Activated T-helper 1 cell treated with anti-CD3 and anti-CD28 coated beads, Interleukin-12 subunit alpha, Interleukin-12 subunit beta, Interleukin-2, Interleukin-4 antibody, amounts not matched to agents 30 ng/mL and 10 ng/mL and 1 ng/mL, durations not matched to agents 14 hours and 24 hours and 36 hours (primary cell): ENCODE measurements at regions of chr11 and their contacts with region 1.

Region 1: GRCh38 chr11:13955971-13956421 is 6.5 kb upstream of the SPON1 start:
- DNase-seq: peak; percentile 20
- H3K4me3 Mint-ChIP-seq: no peak overlapping the region
- H3K27ac Mint-ChIP-seq: no peak overlapping the region
- H3K4me1 Mint-ChIP-seq: no peaks in the 10 kb centered on the region
- H3K27me3 Mint-ChIP-seq: peaks cover 39% of the 10 kb centered on the region

Region 2: GRCh38 chr11:13928566-13929251 is 27.3 kb before region 1 on chr11:
- intact Hi-C with region 1: no loop called
- DNase-seq: no peak
- H3K4me3 Mint-ChIP-seq: no peak overlapping the region
- H3K27ac Mint-ChIP-seq: no peak overlapping the region
- H3K4me1 Mint-ChIP-seq: peaks cover 32% of the 10 kb centered on the region
- H3K27me3 Mint-ChIP-seq: peaks cover 3% of the 10 kb centered on the region

Region 3: DNA sequence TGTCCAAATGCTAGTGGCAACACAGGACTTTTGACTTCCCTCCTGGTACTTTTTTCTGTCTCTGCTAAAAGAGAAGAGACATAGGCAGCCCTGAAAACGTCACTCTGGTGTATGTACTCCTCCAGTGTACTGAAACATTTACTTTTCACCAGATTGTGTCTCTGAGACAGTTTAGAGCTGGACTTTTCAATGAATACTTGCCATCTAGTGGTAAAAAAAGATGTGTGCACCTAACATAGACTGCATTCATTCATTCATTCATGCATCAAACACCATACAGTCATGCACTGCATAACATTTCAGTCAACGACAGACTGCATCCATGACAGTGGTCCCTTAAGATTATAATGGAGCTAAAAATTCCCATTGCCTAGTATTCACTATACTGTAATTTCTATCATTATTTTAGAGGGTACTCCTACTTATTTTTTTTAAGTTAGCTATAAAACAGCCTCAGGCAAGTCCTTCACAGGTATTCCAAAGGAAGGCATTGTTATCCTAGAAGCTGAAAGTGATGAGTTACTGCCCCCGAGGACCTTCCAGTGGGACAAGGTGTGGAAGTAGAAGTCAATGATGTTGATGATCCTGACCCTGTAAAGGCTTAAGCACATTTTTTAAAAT is 192.8 kb after region 1 on chr11:
- intact Hi-C with region 1: loop called (anchors 1 kb)
- DNase-seq: no peak
- H3K4me3 Mint-ChIP-seq: no peak overlapping the region
- H3K27ac Mint-ChIP-seq: no peak overlapping the region
- H3K4me1 Mint-ChIP-seq: peaks cover 4% of the 10 kb centered on the region
- H3K27me3 Mint-ChIP-seq: peaks cover 10% of the 10 kb centered on the region